Activated CD8-positive, alpha-beta T cell treated with anti-CD3 and anti-CD28 coated beads for 36 hours (primary cell): ENCODE measurements at regions of chr5 and their contacts with region 1.

Region 1: GRCh38 chr5:17216176-17216973 is 1.1 kb upstream of the BASP1 start:
- DNase-seq: peak; percentile 74
- ATAC-seq: no peak
- H3K4me3 Mint-ChIP-seq: peak overlapping the region; percentile 9
- H3K27ac Mint-ChIP-seq: no peak overlapping the region
- H3K4me1 Mint-ChIP-seq: peaks cover 7% of the 10 kb centered on the region
- H3K27me3 Mint-ChIP-seq: peaks cover 41% of the 10 kb centered on the region
- CTCF ChIP-seq: peak; percentile 57

Region 2: GRCh38 chr5:18305297-18305924 is 1089.0 kb after region 1 on chr5:
- CTCF ChIA-PET with region 1: interaction called, 19 read pairs
- POLR2A ChIA-PET with region 1: no interaction called
- intact Hi-C with region 1: loop called (anchors 5 kb)
- DNase-seq: peak; percentile 3
- ATAC-seq: no peak
- H3K4me3 Mint-ChIP-seq: no peak overlapping the region
- H3K27ac Mint-ChIP-seq: no peak overlapping the region
- H3K4me1 Mint-ChIP-seq: no peaks in the 10 kb centered on the region
- H3K27me3 Mint-ChIP-seq: no peaks in the 10 kb centered on the region
- CTCF ChIP-seq: peak; percentile 20

Region 3: DNA sequence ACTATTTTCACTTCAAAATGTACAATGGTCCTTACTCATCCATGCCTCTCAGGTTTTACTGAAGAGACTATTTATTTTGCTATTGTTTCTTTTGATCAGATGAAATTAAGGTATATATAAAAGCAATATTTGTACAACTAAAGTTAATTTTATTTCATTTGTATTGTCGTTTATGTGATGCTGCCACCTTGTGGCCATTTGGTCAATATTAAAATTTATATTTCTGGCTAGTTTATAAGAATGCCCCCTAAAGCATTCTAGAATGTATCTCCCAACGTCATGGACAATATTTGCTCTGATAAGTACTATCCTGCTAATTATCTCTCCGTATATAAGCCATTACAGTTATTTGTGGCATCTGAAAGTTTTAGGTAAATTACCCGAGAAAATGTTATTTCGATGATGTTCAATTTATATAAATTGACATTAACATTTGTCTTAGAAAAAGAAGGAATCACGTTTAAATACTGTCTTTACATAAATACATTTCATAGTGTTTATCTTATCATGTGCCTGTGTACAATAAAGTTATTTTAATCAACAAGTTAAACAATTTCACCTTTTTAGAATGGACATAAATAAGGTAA is 1097.9 kb after region 1 on chr5:
- CTCF ChIA-PET with region 1: interaction called, 8 read pairs
- POLR2A ChIA-PET with region 1: no interaction called
- intact Hi-C with region 1: loop called (anchors 5 kb)
- DNase-seq: peak; percentile 15
- ATAC-seq: no peak
- H3K4me3 Mint-ChIP-seq: no peak overlapping the region
- H3K27ac Mint-ChIP-seq: no peak overlapping the region
- H3K4me1 Mint-ChIP-seq: no peaks in the 10 kb centered on the region
- H3K27me3 Mint-ChIP-seq: no peaks in the 10 kb centered on the region
- CTCF ChIP-seq: peak; percentile 50